ENCODE measurements at regions of chr1 and their contacts with region 1.

Region 1: DNA sequence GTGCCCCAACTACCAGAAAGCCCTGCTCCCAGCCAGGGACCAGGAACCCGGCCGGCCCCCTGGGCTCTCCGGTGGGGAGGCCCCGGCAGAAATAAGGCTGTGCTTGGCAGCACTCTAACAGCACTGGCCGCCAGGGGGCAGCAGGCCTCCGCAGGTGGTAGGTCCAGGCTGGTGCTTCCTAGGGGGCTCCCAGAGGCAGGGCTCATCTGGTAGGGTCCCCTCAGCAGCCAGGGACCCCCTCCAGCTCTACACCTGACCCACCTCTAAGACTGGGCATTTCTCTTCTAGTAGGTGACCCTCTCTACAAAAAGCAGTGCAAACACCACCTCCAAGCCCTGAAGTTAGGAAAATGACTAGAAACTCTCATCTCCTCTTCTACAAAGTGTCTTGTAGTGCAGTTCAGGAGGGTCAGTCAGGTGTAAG is 85.6 kb downstream of the STUM start:
- DNase-seq: peak; percentile 87
- H3K4me3 Mint-ChIP-seq: no peak overlapping the region
- H3K27ac Mint-ChIP-seq: no peak overlapping the region
- H3K4me1 Mint-ChIP-seq: no peaks in the 10 kb centered on the region
- H3K27me3 Mint-ChIP-seq: no peaks in the 10 kb centered on the region
- CTCF ChIP-seq: peak; percentile 99

Region 2: GRCh38 chr1:226603022-226603857 is 30.9 kb before region 1 on chr1:
- CTCF ChIA-PET with region 1: no interaction called
- intact Hi-C with region 1: no loop called
- DNase-seq: no peak
- H3K4me3 Mint-ChIP-seq: no peak overlapping the region
- H3K27ac Mint-ChIP-seq: no peak overlapping the region
- H3K4me1 Mint-ChIP-seq: no peaks in the 10 kb centered on the region
- H3K27me3 Mint-ChIP-seq: peaks cover 93% of the 10 kb centered on the region
- CTCF ChIP-seq: no peak

Region 3: DNA sequence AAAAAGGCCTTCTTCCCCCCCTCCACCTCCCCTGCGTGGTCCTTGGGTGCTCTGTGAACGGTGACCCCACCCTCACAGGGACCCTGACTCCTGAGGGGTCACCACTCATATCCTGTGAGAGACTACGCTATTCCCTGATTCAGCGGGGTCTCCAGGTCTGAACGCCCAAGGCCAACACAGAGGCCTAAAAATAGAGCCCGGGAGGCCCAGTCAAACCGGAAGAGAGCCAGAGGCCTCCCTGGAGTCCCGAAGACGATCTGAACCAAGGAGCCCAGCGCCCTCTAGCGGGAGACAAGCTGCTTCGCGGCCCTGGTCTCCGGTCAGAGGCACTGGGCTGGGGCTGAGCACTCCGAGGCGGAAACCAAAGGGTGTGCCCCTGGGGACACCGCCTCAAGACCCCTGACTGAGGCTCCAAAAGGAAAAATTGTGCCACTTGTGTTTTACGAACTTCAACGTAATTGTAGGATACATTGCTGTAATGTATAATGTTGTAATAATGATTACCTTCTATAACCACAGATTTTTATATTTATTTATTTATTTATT is 193.9 kb after region 1 on chr1:
- CTCF ChIA-PET with region 1: interaction called, 19 read pairs
- intact Hi-C with region 1: loop called (anchors 1 kb)
- DNase-seq: peak; percentile 98
- H3K4me3 Mint-ChIP-seq: no peak overlapping the region
- H3K27ac Mint-ChIP-seq: no peak overlapping the region
- H3K4me1 Mint-ChIP-seq: no peaks in the 10 kb centered on the region
- H3K27me3 Mint-ChIP-seq: peaks cover 37% of the 10 kb centered on the region
- CTCF ChIP-seq: peak; percentile 90

Measured in Calu3 (cell line).